BJ (cell line): ENCODE measurements at regions of chr17 and their contacts with region 1.

Region 1: DNA sequence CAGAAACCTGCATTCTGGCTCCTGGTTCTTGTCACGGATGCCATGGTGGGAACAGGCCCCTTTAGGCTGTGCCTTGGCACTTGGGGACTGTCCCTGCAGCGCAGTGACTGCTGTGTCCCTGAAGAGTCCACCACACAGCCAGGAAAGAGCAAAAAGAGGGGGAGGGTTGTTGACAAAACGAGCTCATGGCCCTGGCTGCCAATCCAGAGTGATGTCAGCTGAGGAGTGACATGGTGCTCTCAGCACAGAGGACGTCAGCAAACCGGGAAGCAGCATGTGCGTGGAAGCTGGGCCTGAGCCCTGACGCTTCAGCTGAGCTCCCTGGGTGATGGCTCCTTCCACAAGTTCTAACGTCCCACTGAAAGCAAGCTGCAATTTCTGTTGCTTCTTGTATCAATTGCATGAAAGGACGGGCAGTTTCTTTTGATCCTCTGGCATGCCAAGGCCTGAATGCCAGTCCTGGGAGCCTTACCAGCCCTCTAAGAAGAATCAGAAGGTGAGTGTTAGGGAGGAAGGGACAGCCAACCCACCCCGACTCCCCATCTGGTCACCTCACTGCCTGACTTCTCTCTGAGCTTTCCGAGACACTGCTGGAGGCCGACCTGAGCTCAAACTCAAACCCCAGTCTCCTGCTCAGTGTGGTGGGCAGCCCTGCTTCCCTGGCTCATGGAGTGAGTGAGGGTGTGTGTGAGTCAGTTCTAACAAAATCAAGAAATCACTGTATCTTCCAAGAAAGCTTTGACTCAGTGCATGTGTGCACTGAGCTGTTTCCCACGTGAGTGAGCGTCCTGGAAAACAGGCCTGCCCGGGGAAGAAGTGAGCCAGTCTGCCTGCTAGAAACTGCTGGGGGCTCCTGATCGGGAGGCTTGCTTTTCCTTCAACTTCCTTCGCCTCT is 14.7 kb upstream of the WNT3 start:
- DNase-seq: peak; percentile 19
- H3K4me3 ChIP-seq: no peak overlapping the region
- H3K27me3 ChIP-seq: peaks cover 2% of the 10 kb centered on the region; the same call in 1 of the 2 replicates
- CTCF ChIP-seq: no peak

Region 2: GRCh38 chr17:46822388-46822921 is 10.7 kb before region 1 on chr17:
- CTCF ChIA-PET with region 1: interaction called, 74 read pairs
- POLR2A ChIA-PET with region 1: no interaction called
- DNase-seq: no peak
- H3K4me3 ChIP-seq: no peak overlapping the region
- H3K27me3 ChIP-seq: peaks cover 52% of the 10 kb centered on the region
- CTCF ChIP-seq: peak; percentile 77

Region 3: DNA sequence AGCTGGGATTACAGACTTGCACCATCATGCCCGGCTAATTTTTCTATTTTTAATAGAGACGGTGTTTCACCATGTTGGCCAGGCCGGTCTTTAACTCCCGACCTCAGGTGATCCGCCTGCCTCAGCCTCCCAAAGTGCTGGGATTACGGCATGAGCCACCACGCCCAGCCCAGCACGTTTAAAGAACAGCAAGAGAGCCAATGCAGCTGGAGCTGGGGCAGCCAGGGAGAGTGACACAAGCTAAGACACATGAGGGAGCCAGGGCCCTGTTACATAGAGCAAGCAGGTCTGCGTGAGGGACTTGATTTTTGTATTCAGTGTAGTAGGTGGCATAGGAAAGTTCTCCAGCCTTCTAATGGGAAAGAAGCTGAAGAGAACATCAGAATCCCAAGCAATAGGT is 68.1 kb after region 1 on chr17:
- CTCF ChIA-PET with region 1: no interaction called
- POLR2A ChIA-PET with region 1: no interaction called
- DNase-seq: no peak
- H3K4me3 ChIP-seq: no peak overlapping the region
- H3K27me3 ChIP-seq: peaks cover 7% of the 10 kb centered on the region
- CTCF ChIP-seq: no peak

Region 4: DNA sequence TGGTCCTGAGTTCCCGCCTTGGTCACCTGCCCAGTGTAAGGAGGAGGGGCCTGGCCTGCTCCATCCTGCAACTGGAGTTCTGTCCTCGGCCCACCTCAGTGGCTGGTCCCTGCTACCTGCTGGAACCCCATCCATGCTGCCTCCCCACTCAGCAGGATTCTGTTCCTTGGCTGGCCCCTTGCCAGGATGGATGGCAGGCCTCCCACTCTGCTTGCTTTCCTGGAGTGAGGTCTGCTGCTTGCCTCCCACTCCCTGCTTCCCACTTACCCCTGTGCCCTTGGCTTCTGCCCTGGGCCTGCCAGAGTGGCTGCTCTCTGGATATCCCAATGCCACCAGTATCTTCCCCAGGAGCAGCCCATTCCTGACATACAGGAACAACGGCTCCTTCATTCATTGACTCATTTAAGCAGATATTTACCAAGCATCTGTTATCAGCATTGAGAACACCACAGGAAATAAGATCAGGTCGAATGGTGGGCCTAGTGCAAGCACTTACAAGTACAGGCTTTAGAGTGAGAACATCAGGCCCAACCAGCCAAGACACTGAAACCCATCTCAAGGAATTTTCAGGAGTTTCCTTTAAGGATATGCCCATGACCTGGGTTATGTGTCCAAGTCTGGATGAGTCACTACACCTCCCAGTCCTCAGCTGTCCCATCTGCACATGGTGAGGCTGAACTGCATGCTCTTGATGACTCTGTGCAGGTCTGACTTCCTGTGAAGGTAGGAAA is 162.8 kb after region 1 on chr17:
- CTCF ChIA-PET with region 1: interaction called, 10 read pairs
- POLR2A ChIA-PET with region 1: no interaction called
- DNase-seq: no peak
- H3K4me3 ChIP-seq: no peak overlapping the region
- H3K27me3 ChIP-seq: 0 out of 2 replicates have a peak, but pooled peaks cover 2% of the 10 kb centered on the region
- CTCF ChIP-seq: no peak